ENCODE measurements at regions of chrX and their contacts with region 1.

Region 1: GRCh38 chrX:129925305-129926092 is 19.5 kb downstream of the UTP14A start:
- DNase-seq: peak; percentile 66 to 72 (median 68)
- H3K4me3 ChIP-seq: no peak overlapping the region
- H3K4me3 Mint-ChIP-seq: no peak overlapping the region
- H3K27ac ChIP-seq: no peak overlapping the region
- H3K27ac Mint-ChIP-seq: peak overlapping the region in 2 of 7 donors; percentile 5 to 52
- H3K4me1 ChIP-seq: no peaks in the 10 kb centered on the region
- H3K4me1 Mint-ChIP-seq: peaks cover 0 to 5% (median 2%) of the 10 kb centered on the region in 4 donors
- H3K27me3 ChIP-seq: no peaks in the 10 kb centered on the region
- H3K27me3 Mint-ChIP-seq: no peaks in the 10 kb centered on the region

Region 2: DNA sequence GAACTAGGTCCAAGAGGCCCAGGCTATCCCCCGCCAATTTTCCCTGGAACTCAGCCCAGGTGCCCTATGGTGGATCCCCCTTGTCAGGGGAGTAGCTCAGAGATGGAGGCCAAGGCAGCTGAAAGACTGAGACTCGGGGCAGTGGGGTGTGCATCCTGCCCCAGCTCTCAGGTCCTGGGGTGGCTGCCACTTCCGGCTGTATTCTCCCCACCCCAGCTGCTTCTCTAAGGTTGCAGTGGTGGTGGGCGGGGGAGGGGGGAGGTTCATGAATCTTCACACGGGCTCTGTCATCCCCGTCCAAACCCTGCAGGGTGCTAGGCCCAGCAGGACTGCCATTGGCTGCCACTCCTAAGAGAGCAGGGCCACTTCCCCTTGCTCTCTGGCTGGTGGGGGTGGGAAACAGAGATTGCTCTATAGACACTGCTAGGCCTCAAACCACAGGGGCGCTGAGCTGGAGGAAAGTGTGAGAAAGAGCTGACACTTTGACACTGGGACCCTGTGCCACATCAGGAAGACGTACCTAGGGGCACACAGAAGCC is 144.3 kb before region 1 on chrX:
- CTCF ChIA-PET with region 1: no interaction called
- POLR2A ChIA-PET with region 1: no interaction called
- intact Hi-C with region 1: no loop called
- DNase-seq: peak; percentile 77 to 93 (median 83)
- H3K4me3 ChIP-seq: peak overlapping the region; percentile 75 to 86
- H3K4me3 Mint-ChIP-seq: peak overlapping the region; percentile 81 to 97 (median 88)
- H3K27ac ChIP-seq: peak overlapping the region; percentile 62
- H3K27ac Mint-ChIP-seq: peak overlapping the region; percentile 82 to 95 (median 92)
- H3K4me1 ChIP-seq: peaks cover 74% of the 10 kb centered on the region
- H3K4me1 Mint-ChIP-seq: peaks cover 42 to 89% (median 67%) of the 10 kb centered on the region in 4 donors
- H3K27me3 ChIP-seq: no peaks in the 10 kb centered on the region
- H3K27me3 Mint-ChIP-seq: no peaks in the 10 kb centered on the region

Region 3: DNA sequence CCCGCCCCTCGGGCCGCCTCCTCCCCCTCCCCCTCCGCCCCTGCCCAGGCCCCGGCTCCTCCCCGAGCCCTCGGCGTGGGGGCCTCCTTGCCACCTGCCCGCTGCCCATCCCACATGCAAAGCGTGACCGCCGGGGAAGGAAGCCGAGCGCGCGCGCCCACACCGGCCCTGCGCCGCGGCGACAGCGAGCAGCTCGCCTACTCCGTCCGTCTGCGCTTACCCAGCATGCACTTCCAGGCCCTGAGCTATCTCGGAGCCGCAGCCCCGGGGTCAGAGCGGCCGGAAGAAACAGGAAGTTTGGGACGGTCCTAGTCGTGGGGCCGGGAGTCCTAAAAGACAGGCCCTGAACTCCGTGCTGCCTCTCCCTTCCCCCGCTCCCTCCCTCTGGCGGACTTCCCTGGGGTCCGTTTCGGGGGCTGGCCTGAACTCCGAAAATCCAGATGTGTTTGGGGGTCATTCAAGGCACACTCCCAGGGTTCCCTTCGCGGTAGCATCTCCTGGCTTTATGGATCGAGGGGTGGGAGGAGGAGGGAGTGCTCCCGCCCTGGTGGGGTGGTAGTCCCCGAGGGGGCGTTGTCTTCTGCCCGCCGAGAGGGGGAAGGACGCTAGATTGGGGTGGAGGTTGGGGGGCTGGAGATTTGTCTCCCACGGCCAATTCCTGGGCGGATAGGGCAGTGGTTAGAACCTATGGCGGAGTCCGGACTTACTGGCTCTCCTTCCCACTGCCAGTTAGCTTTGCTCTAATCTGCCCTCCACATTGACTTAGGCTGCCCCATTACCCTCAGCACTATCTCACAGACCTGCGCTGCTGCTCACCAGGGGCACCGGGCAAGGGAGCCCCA is 32.0 kb after region 1 on chrX:
- CTCF ChIA-PET with region 1: interaction called, 12 read pairs
- POLR2A ChIA-PET with region 1: interaction called, 12 read pairs
- intact Hi-C with region 1: no loop called
- DNase-seq: peak in 1 of 5 donors; percentile 47
- H3K4me3 ChIP-seq: peak overlapping the region in 1 of 2 donors; percentile 28
- H3K4me3 Mint-ChIP-seq: peak overlapping the region in 7 of 8 donors; percentile 46 to 70 (median 64)
- H3K27ac ChIP-seq: no peak overlapping the region
- H3K27ac Mint-ChIP-seq: peak overlapping the region in 4 of 7 donors; percentile 50 to 61 (median 57)
- H3K4me1 ChIP-seq: peaks cover 22% of the 10 kb centered on the region
- H3K4me1 Mint-ChIP-seq: peaks cover 14 to 49% (median 26%) of the 10 kb centered on the region in 4 donors
- H3K27me3 ChIP-seq: no peaks in the 10 kb centered on the region
- H3K27me3 Mint-ChIP-seq: peaks cover 2% of the 10 kb centered on the region in 2 donors

Region 4: DNA sequence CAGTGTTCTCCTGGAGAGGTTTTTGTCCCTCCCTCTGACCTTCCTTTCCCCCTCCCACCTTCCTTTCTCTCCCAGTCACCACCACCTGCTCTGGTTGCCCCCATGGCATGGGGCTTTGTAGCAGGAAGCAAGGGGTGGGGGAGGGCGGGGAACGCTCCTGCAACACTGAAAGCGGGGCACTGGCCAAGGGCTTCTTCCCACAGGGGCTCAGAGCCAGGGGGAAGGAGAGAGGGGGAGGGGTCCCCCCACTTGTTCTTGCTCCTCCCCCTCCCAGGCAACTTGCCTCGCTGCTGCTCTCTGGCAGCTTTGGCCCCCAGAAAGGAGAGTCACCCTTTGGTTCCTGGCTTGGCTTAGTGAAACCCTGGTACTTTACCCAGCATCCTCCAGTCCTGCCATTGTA is 105.3 kb after region 1 on chrX:
- CTCF ChIA-PET with region 1: interaction called, 291 read pairs
- POLR2A ChIA-PET with region 1: interaction called, 11 read pairs
- intact Hi-C with region 1: loop called (anchors 1 kb)
- DNase-seq: no peak
- H3K4me3 ChIP-seq: no peak overlapping the region
- H3K4me3 Mint-ChIP-seq: no peak overlapping the region
- H3K27ac ChIP-seq: no peak overlapping the region
- H3K27ac Mint-ChIP-seq: no peak overlapping the region
- H3K4me1 ChIP-seq: no peaks in the 10 kb centered on the region
- H3K4me1 Mint-ChIP-seq: peaks cover 0 to 2% (median under 1%) of the 10 kb centered on the region in 4 donors
- H3K27me3 ChIP-seq: no peaks in the 10 kb centered on the region
- H3K27me3 Mint-ChIP-seq: no peaks in the 10 kb centered on the region

Region 5: DNA sequence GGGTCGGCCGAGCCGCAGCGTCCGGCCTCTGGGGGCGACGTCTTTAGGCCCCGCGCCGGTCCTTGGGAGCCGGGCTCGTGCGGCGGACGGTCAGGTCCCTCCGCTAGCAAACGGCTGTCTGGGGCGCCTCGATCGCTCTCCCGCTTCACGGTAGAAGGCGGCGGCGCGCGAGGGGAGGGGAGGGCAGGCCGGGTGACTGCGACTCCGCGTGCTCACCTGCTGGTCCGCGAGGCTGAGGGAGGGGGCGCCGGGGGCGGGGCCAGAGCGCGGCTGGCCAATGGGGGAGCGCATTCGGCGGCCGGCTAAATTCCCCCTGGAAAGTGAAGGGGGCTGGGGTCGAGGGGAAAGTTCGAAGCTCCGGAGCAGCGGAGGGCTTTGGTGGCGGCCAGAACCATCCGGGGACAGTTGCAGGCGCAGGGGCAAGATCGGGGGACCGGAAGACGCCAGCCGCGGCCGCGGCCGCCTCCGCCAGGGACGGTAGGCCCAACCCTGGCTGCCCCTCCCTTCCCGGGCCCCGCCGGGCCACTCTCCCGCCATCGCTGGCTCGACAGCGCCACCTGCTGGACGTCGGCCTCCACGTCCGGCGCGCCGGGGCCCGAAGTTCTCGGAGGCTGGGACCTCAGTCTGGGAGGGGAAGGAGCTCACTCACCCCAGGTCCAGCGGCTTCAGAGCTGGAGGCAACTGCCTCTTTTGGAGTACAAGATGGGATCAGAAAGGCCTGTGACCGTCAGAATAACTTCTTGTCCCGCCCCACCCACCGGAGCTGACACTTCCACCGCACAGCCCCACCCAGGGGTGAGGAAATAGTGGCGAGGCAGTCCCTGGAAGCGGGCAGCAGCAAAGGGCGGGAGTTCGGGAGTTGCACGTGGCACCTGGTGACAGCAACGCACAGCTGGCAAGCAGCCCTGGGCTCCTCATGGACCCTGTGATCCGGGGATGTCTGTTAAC is 134.9 kb after region 1 on chrX:
- CTCF ChIA-PET with region 1: interaction called, 95 read pairs
- POLR2A ChIA-PET with region 1: interaction called, 9 read pairs
- intact Hi-C with region 1: loop called (anchors 1 kb)
- DNase-seq: peak; percentile 71 to 79 (median 72)
- H3K4me3 ChIP-seq: peak overlapping the region in 1 of 2 donors; percentile 28
- H3K4me3 Mint-ChIP-seq: peak overlapping the region; percentile 65 to 82 (median 75)
- H3K27ac ChIP-seq: peak overlapping the region; percentile 39
- H3K27ac Mint-ChIP-seq: peak overlapping the region in 5 of 7 donors; percentile 27 to 70 (median 55)
- H3K4me1 ChIP-seq: peaks cover 7% of the 10 kb centered on the region
- H3K4me1 Mint-ChIP-seq: peaks cover 3 to 17% (median 11%) of the 10 kb centered on the region in 4 donors
- H3K27me3 ChIP-seq: no peaks in the 10 kb centered on the region
- H3K27me3 Mint-ChIP-seq: no peaks in the 10 kb centered on the region

Region 6: GRCh38 chrX:130196466-130196865 is 271.0 kb after region 1 on chrX:
- CTCF ChIA-PET with region 1: interaction called, 3 read pairs
- POLR2A ChIA-PET with region 1: no interaction called
- intact Hi-C with region 1: loop called (anchors 1 kb)
- DNase-seq: no peak
- H3K4me3 ChIP-seq: no peak overlapping the region
- H3K4me3 Mint-ChIP-seq: no peak overlapping the region
- H3K27ac ChIP-seq: no peak overlapping the region
- H3K27ac Mint-ChIP-seq: no peak overlapping the region
- H3K4me1 ChIP-seq: peaks cover 5% of the 10 kb centered on the region
- H3K4me1 Mint-ChIP-seq: peaks cover 0 to 5% (median 2%) of the 10 kb centered on the region in 4 donors
- H3K27me3 ChIP-seq: no peaks in the 10 kb centered on the region
- H3K27me3 Mint-ChIP-seq: peaks cover 0 to 2% of the 10 kb centered on the region in 2 donors

Measured in CD4-positive, alpha-beta memory T cell (primary cell).